AG04449 (cell line): ENCODE measurements at regions of chr3 and their contacts with region 1.

Region 1: GRCh38 chr3:120795017-120795648 is 52.6 kb downstream of the GTF2E1 start:
- DNase-seq: no peak
- H3K4me3 ChIP-seq: no peak overlapping the region
- CTCF ChIP-seq: peak; percentile 75

Region 2: GRCh38 chr3:120596116-120596852 is 198.8 kb before region 1 on chr3 and contains the start of gene NDUFB4:
- CTCF ChIA-PET with region 1: interaction called, 26 read pairs
- POLR2A ChIA-PET with region 1: interaction called, 7 read pairs
- DNase-seq: peak; percentile 93
- H3K4me3 ChIP-seq: peak within 1 kb of the TSS; percentile 84
- CTCF ChIP-seq: no peak

Region 3: DNA sequence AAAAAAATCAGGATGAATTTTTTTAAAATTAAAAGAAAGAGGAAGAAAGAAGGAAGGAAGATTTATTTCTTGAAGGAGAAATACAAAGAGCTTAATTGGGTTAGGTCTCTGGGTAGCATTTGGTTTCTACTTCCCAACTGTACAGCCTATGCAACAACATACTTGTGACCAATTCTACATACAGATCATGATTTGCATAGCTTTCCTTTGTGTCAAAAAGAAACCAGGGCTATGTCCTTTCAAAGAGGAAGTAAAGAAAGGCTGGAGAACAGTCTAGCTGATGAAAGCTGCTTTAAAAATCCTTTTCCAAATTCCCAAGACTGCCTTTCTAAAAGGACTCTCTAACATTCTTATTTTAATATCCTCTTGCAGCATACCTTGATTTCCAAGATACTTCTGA is 107.0 kb before region 1 on chr3:
- CTCF ChIA-PET with region 1: interaction called, 17 read pairs
- POLR2A ChIA-PET with region 1: no interaction called
- DNase-seq: peak; percentile 61
- H3K4me3 ChIP-seq: no peak overlapping the region
- CTCF ChIP-seq: no peak

Region 4: DNA sequence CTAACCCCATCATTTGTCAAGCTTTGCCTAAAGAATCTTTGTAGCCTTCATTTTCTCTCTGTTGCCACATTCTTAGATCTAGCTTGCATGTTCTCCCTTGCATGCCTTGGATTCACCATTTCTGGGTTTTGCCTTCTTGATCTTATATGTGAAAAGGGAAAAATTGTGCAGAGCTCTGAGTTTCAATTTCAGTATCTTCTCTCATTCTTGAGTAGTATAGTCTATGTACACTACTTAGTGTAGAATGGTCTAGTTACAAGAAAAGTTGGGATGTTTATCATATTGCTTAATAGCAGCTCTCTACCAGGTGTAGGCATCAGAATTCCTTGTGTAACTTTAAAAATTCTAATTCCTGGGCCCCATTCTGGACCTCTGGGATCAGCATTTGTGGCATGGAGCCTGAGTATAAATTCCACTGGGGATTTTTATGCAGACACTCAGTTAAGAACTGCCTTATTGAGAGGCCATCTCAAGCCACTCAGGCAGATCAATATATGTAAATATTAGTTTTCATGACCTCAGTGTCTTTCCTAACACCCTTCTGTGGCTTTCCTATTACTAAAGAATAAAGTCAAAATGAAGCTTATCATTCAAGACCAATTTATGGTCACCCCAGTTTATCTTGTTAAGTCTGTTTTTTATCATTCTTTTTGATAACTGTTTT is 29.2 kb before region 1 on chr3:
- CTCF ChIA-PET with region 1: interaction called, 48 read pairs
- POLR2A ChIA-PET with region 1: interaction called, 3 read pairs
- DNase-seq: no peak
- H3K4me3 ChIP-seq: no peak overlapping the region
- CTCF ChIP-seq: no peak

Region 5: DNA sequence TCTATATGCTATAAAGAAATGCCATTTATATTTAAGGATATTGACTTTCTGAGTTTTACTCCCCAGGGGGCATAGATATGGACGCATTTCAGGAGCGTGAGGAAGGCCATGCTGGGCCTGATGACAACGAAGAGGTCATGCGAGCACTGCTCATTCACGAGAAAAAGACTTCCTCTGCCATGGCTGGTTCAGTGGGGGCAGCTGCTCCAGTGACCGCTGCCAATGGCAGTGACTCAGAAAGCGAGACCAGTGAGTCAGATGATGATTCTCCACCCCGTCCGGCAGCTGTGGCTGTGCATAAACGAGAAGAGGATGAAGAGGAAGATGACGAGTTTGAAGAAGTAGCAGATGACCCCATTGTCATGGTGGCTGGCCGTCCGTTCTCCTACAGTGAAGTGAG is 14.2 kb before region 1 on chr3:
- CTCF ChIA-PET with region 1: interaction called, 48 read pairs
- POLR2A ChIA-PET with region 1: no interaction called
- DNase-seq: no peak
- H3K4me3 ChIP-seq: no peak overlapping the region
- CTCF ChIP-seq: no peak

Region 6: GRCh38 chr3:120824613-120825012 is 29.5 kb after region 1 on chr3:
- CTCF ChIA-PET with region 1: interaction called, 17 read pairs
- POLR2A ChIA-PET with region 1: no interaction called
- DNase-seq: no peak
- H3K4me3 ChIP-seq: no peak overlapping the region
- CTCF ChIP-seq: no peak